CD4-positive, alpha-beta memory T cell (primary cell): ENCODE measurements at regions of chr11 and their contacts with region 1.

Region 1: DNA sequence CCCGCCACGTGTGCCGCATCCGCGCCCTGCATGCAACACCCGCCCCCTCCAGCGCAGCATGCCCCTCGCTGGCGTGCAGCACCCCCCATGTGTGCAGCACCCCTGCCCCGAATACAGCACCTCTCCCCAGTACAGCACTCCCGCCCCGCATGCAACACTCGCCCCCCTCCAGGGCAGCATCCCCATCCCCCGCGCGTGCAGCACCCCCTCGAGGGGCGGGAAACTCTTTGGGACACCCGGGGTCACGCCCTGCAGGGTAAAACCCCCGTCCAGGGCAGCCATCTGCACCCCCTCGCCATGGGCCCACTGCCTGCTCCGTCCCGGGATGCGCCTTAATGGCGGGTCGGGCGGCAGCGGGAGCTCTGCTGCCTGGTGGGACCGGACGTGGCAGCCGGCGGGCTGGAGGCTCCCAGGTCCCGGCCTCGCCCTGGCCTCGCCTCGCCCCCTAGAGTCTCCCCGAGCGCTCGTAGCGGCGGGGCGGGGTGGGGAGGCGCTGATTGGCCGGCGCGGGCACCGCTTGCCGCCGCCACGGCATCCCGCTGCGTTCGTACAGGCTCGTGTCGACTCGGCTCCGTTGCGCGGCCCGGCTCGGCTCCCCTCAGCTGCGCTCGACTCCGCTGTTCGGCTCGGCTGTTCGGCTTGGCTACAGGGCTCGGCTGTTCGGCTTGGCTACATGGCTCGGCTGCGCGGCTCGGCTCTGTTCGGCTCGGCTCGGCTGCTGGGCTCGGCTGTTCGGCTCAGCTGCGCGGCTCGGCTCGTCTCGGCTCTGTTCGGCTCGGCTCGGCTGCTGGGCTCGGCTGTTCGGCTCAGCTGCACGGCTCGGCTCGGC is 417 bp upstream of the BRSK2 start:
- DNase-seq: peak; percentile 97 to 98 (median 98)
- H3K4me3 ChIP-seq: peak overlapping the region in 1 of 2 donors; percentile 58
- H3K4me3 Mint-ChIP-seq: peak overlapping the region; percentile 61 to 86 (median 80)
- H3K27ac ChIP-seq: peak overlapping the region; percentile 61
- H3K27ac Mint-ChIP-seq: peak overlapping the region in 4 of 7 donors; percentile 18 to 59 (median 46)
- H3K4me1 ChIP-seq: peaks cover 9% of the 10 kb centered on the region
- H3K4me1 Mint-ChIP-seq: peaks cover 6 to 29% (median 12%) of the 10 kb centered on the region in 4 donors
- H3K27me3 ChIP-seq: peaks cover 8% of the 10 kb centered on the region
- H3K27me3 Mint-ChIP-seq: peaks cover 13 to 20% of the 10 kb centered on the region in 2 donors

Region 2: GRCh38 chr11:832321-833113 is 556.8 kb before region 1 on chr11 and contains the start of gene CD151:
- CTCF ChIA-PET with region 1: no interaction called
- POLR2A ChIA-PET with region 1: no interaction called
- intact Hi-C with region 1: no loop called
- DNase-seq: peak in 1 of 5 donors; percentile 45
- H3K4me3 ChIP-seq: peak within 1 kb of the TSS in 1 of 2 donors; percentile 43
- H3K4me3 Mint-ChIP-seq: peak within 1 kb of the TSS; percentile 51 to 82 (median 68)
- H3K27ac ChIP-seq: peak within 1 kb of the TSS; percentile 15
- H3K27ac Mint-ChIP-seq: peak within 1 kb of the TSS in 3 of 7 donors; percentile 19 to 63 (median 36)
- H3K4me1 ChIP-seq: peaks cover 52% of the 10 kb centered on the region
- H3K4me1 Mint-ChIP-seq: peaks cover 2 to 43% (median 19%) of the 10 kb centered on the region in 4 donors
- H3K27me3 ChIP-seq: peaks cover 3% of the 10 kb centered on the region
- H3K27me3 Mint-ChIP-seq: peaks cover 7 to 13% of the 10 kb centered on the region in 2 donors
- total RNA-seq, gene CD151: 20.7 to 23.4 TPM

Region 3: DNA sequence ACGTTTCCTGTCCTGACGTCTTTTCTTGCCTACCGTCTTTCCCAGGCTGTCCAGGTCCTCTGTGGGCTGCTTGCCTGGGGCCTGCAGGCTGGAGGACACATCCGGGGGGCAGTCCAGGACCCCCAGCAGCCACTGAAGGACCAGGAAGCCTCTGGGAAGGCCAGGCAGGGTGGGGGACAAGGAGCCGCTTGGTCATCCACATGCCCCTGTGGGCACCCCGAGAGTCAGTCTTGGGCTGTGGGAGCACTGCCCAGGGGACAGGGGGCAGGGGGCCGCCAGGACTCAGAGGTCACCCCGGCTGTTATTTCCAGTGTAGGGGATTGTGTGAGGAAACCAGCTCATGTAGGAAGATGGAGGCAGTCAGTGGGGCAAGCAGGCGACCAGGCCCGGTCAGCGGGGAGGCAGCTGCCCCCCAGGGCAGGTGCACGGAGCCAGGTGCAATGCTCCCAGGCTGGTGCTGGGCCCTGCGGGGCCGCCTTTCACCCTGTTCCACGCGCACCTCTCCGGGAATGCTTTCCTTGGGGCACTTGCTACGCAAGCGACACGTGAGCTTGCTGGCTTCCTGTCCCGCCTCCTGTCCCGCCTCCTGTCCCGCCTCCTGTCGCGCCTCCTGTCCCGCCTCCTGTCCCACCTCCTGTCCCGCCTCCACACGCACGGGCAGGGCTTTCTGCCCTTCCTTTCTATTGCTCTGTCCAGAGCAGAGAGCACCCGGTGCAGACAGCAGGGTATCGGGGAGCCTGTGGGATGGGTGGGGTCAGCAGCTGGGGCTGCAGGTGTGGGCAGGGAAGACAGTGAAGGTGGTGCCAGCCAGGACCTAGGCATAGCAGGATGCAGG is 126.9 kb before region 1 on chr11:
- CTCF ChIA-PET with region 1: interaction called, 4 read pairs
- POLR2A ChIA-PET with region 1: interaction called, 12 read pairs
- intact Hi-C with region 1: loop called (anchors 1 kb)
- DNase-seq: peak; percentile 86 to 89 (median 87)
- H3K4me3 ChIP-seq: peak overlapping the region; percentile 65 to 71
- H3K4me3 Mint-ChIP-seq: peak overlapping the region; percentile 79 to 93 (median 86)
- H3K27ac ChIP-seq: peak overlapping the region; percentile 77
- H3K27ac Mint-ChIP-seq: peak overlapping the region; percentile 67 to 97 (median 92)
- H3K4me1 ChIP-seq: peaks cover 17% of the 10 kb centered on the region
- H3K4me1 Mint-ChIP-seq: peaks cover 7 to 23% (median 12%) of the 10 kb centered on the region in 4 donors
- H3K27me3 ChIP-seq: no peaks in the 10 kb centered on the region
- H3K27me3 Mint-ChIP-seq: no peaks in the 10 kb centered on the region

Region 4: GRCh38 chr11:1358286-1358685 is 31.0 kb before region 1 on chr11:
- CTCF ChIA-PET with region 1: no interaction called
- POLR2A ChIA-PET with region 1: no interaction called
- intact Hi-C with region 1: no loop called
- DNase-seq: no peak
- H3K4me3 ChIP-seq: no peak overlapping the region
- H3K4me3 Mint-ChIP-seq: no peak overlapping the region
- H3K27ac ChIP-seq: no peak overlapping the region
- H3K27ac Mint-ChIP-seq: no peak overlapping the region
- H3K4me1 ChIP-seq: no peaks in the 10 kb centered on the region
- H3K4me1 Mint-ChIP-seq: no peaks in the 10 kb centered on the region
- H3K27me3 ChIP-seq: no peaks in the 10 kb centered on the region
- H3K27me3 Mint-ChIP-seq: peaks cover 8 to 10% of the 10 kb centered on the region in 2 donors